A549 (cell line): ENCODE measurements at regions of chr15 and their contacts with region 1.

Region 1: DNA sequence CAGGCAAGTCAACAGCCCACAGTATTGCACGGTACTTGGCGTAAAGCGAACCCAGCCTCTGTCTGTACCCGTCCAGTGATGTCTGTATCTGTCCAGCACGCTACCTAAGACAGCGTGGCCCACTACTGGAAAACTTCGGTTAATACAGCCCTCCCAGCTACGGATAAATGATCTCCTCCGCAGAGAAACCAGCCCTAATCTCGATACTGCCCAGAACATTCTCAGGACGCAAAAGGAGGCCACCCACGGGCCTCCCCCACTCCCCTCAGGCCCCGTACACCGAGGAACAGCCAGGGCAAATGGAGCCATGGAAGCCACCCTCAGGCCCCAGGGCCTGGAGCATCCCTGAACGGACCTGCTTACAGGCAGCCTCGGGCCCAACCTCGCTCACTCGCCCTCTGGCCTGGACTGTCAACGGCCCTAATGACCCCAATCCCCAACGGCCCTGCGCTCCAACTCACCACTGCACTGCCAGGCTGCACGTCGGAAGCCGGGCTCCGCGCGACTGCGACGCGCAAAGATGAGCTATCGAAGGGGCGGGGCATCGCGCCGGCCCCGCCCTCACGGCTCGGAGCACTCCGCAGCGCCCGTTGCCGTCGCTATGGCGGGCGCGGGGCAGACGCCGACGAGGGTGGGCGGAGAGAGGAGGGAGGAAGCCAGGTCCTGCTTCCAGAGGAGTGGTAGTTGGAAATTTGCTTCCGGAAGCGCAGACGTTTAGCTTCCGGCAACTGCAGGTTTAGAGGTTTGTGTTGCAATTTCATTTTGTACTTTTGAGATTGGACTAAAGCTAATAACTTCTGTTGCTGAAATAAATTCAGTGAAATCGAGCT is at the start of gene SKIC8:
- DNase-seq: peak; percentile 95 to 97
- ATAC-seq: peak; percentile 95 to 98
- H3K4me3 ChIP-seq: peak within 1 kb of the TSS; percentile 79
- H3K27ac ChIP-seq: peak within 1 kb of the TSS; percentile 77 to 88
- H3K4me1 ChIP-seq: peaks cover 25% of the 10 kb centered on the region
- CTCF ChIP-seq: no peak
- EP300 ChIP-seq: no peak
- POLR2A ChIP-seq: peak; percentile 97
- RAD21 ChIP-seq: no peak
- polyA plus RNA-seq, gene SKIC8: 162 and 177 TPM in 2 replicates

Region 2: DNA sequence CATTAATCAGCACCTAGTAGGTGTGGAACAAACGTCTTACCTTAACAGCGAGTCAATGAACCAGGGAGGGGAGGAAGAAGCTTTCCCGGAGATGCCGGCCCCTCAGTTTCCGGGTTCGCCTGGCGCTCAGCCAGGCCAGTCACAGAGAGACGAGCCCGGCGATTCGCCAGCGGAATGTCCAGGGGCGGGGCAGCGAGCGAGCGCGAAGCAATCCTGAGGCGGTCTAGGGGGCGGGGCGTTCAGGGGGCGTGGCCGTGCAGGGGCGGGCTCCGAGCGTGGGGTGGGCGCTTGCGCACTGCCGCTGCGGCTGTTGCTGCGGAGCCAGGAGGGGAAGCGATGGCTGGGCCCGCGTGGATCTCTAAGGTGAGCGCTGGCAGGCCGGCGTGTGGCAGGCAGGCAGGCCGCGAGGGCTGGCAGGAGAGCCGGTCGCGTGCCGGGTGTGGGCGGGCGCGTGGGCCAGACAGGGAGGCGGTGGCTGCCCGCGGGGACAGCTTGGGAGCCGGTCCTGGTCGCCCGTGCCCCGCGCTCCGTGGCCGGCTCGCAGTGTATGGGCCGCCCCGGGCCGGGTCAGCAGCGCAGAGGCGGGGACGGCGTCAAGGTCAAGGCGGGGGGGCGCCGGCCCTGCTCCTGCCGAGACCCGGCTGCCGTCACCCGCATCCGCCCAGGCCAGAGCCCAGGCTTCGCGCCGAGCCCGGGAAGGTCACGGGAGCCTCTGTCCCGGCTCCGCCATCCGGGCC is 150.1 kb before region 1 on chr15 and contains the start of gene IDH3A:
- CTCF ChIA-PET with region 1: no interaction called
- POLR2A ChIA-PET with region 1: interaction called, 12 read pairs
- DNase-seq: peak; percentile 97
- ATAC-seq: peak; percentile 93 to 95
- H3K4me3 ChIP-seq: peak within 1 kb of the TSS; percentile 74
- H3K27ac ChIP-seq: peak within 1 kb of the TSS; percentile 80 to 92
- H3K4me1 ChIP-seq: peaks cover 16% of the 10 kb centered on the region
- CTCF ChIP-seq: no peak
- EP300 ChIP-seq: no peak
- POLR2A ChIP-seq: peak; percentile 97
- RAD21 ChIP-seq: no peak
- polyA plus RNA-seq, gene IDH3A: 148 and 149 TPM in 2 replicates

Region 3: DNA sequence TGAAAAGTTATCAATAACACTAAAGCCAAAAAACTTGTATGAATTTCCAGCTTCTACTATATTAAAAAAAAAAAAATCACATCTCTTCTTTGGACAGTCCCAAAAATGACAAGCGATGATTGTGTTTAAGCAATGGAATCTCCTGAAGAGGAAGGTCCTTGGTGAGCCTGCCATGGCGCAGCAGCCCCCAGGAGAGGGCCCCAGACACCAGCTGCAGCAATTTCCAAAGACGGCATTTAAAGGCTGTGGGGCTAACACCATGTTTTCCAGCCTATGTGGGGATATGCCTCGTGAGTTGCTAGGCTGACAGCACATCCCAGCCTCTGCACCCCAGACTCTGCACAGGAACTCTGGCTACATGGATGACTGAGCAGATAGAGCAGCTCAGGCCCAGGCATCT is 14.6 kb before region 1 on chr15:
- CTCF ChIA-PET with region 1: interaction called, 5 read pairs
- POLR2A ChIA-PET with region 1: interaction called, 17 read pairs
- DNase-seq: no peak
- ATAC-seq: no peak; a peak in 1 of 6 replicates
- H3K4me3 ChIP-seq: no peak overlapping the region
- H3K27ac ChIP-seq: no peak overlapping the region
- H3K4me1 ChIP-seq: no peaks in the 10 kb centered on the region
- CTCF ChIP-seq: no peak; the same call in 2 of the 3 replicates
- EP300 ChIP-seq: no peak
- POLR2A ChIP-seq: no peak
- RAD21 ChIP-seq: 0 out of 5 replicates have a peak, but pooled peaks of 1 of the 2 experiments have one; percentile 10

Region 4: GRCh38 chr15:78360426-78360825 is 61.1 kb after region 1 on chr15:
- CTCF ChIA-PET with region 1: no interaction called
- POLR2A ChIA-PET with region 1: no interaction called
- DNase-seq: no peak
- ATAC-seq: no peak
- H3K4me3 ChIP-seq: no peak overlapping the region
- H3K27ac ChIP-seq: no peak overlapping the region
- H3K4me1 ChIP-seq: no peaks in the 10 kb centered on the region
- CTCF ChIP-seq: no peak
- EP300 ChIP-seq: no peak
- POLR2A ChIP-seq: no peak
- RAD21 ChIP-seq: no peak

Region 5: GRCh38 chr15:78437762-78438302 is 138.5 kb after region 1 on chr15 and contains the start of gene IREB2:
- CTCF ChIA-PET with region 1: interaction called, 4 read pairs
- POLR2A ChIA-PET with region 1: interaction called, 32 read pairs
- DNase-seq: peak; percentile 99
- ATAC-seq: peak; percentile 93 to 96
- H3K4me3 ChIP-seq: peak within 1 kb of the TSS; percentile 97
- H3K27ac ChIP-seq: peak within 1 kb of the TSS; percentile 93 to 98
- H3K4me1 ChIP-seq: peaks cover 27% of the 10 kb centered on the region
- CTCF ChIP-seq: no peak
- EP300 ChIP-seq: no peak
- POLR2A ChIP-seq: peak; percentile 64
- RAD21 ChIP-seq: no peak
- polyA plus RNA-seq, gene IREB2: 71.0 and 78.1 TPM in 2 replicates